Calu3 (cell line): ENCODE measurements at regions of chr4 and their contacts with region 1.

Region 1: DNA sequence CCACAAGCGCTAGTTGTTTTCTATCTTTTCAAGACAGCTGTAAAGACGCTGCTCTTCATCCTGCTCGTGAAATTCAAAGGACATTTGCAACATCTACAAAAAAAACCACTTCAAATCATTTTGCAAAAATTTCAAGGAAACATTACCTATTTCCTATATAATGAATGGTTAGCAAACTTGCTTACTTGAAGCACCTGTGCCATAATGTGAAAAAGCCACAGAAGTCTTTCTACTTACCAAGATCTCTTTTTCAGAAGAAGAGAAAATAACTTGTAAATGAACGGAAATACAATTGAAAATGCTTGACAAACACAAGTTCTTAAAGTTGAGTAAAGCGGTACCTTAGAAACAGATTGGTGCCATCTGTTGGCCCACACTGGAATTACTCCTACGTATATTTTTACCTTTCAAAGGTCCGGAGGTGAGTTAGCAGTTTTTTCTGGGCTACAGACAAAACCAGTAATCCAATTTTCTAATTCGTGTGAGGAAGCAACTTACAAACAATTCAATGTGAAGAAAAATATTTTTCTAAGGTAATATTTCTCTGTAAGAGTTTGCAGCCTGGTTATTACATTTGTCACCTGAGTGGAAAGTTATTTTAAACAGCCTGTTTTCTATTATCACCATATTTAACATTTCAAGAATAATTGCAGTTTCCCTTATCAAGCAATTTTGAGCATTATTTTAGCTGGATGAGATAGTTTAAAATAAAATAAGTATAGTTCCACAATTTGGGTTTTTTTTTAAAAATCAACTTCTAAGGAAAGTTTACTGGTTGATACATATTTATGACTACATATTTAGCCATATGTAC is at the start of gene TLR6:
- DNase-seq: peak; percentile 62
- H3K4me3 Mint-ChIP-seq: peak within 1 kb of the TSS; percentile 11
- H3K27ac Mint-ChIP-seq: peak within 1 kb of the TSS; percentile 81
- H3K4me1 Mint-ChIP-seq: peaks cover 27% of the 10 kb centered on the region
- H3K27me3 Mint-ChIP-seq: no peaks in the 10 kb centered on the region
- CTCF ChIP-seq: no peak
- total RNA-seq, gene TLR6: 0.68 and 0.73 TPM in 2 replicates

Region 2: DNA sequence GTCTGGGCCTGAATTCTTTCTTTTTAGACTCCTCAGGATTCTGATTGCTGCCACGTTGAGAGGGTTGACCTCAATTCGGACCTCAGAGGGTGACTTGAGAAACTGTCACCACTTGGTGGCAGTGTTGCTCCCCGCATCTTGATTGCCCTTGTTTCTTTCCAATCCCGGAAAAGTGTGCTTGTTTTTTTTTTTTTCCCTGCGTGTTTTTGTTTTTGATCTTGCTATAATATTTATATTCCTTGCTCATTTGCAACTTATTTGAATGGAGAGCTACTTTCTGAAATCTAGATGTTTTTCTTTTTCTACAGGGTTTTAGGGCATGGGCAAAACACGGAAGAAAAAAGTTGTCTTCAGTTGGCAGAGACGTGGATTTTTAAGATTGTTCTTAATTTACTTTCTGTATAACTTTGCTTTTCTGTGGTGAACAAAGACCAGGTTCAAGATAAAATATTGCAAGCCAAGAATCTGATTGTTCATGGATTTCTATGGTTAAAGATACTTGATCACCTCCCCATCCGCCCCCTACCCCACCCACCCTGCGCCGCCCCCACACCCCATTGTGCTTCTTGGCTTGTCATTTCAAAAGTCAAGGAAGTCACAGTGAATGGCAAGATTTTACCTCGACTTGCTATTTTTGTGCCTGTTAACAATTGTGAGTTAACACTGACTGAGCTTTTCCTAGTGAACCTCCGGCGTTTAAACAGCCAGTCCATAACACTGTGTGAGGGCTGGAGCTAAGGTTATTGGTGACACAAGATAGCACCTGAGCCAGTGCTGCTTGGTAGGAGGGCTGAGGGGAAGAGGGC is 794.4 kb before region 1 on chr4:
- CTCF ChIA-PET with region 1: no interaction called
- intact Hi-C with region 1: loop called (anchors 10 kb)
- DNase-seq: peak; percentile 67
- H3K4me3 Mint-ChIP-seq: peak overlapping the region; percentile 35
- H3K27ac Mint-ChIP-seq: peak overlapping the region; percentile 38
- H3K4me1 Mint-ChIP-seq: peaks cover 8% of the 10 kb centered on the region
- H3K27me3 Mint-ChIP-seq: no peaks in the 10 kb centered on the region
- CTCF ChIP-seq: peak; percentile 73

Region 3: DNA sequence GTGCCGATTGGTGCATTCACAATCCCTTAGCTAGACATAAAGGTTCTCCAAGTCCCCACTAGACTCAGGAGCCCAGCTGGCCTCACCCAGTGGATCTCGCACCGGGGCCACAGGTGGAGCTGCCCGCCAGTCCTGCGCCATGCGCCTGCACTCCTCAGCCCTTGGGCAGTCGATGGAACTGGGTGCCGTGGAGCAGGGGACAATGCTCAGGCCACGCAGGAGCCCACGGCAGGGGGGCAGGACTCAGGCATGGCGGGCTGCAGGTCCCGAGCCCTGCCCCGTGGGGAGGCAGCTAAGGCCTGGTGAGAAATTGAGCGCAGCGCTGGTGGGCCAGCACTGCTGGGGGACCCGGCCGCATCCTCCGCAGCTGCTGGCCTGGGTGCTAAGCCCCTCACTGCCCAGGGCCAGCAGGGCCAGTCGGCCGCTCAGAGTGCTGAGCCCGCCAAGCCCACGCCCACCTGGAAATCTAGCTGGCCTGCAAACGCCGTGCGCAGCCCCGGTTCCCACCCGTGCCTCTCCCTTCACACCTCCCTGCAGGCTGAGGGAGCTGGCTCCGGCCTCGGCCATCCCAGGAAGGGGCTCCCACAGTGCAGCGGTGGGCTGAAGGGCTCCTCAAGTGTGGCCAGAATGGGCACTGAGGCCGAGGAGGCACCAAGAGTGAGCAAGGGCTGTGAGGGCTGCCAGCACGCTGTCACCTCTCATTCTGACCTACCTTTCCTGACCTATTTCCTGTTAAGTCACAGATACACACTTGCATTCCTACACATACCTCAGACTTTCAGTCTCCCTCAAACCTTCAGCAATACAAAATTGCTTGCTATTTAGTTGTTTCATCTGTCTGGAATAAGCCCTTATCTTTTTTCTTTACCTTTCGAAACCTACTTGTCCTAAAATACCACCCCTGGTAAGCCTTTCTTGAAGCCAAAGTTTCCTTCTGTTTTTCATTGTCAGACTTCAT is 861.9 kb after region 1 on chr4:
- CTCF ChIA-PET with region 1: no interaction called
- intact Hi-C with region 1: no loop called
- DNase-seq: no peak
- H3K4me3 Mint-ChIP-seq: no peak overlapping the region
- H3K27ac Mint-ChIP-seq: no peak overlapping the region
- H3K4me1 Mint-ChIP-seq: peaks cover 9% of the 10 kb centered on the region
- H3K27me3 Mint-ChIP-seq: no peaks in the 10 kb centered on the region
- CTCF ChIP-seq: no peak